ENCODE measurements at regions of chr6 and their contacts with region 1.

Region 1: DNA sequence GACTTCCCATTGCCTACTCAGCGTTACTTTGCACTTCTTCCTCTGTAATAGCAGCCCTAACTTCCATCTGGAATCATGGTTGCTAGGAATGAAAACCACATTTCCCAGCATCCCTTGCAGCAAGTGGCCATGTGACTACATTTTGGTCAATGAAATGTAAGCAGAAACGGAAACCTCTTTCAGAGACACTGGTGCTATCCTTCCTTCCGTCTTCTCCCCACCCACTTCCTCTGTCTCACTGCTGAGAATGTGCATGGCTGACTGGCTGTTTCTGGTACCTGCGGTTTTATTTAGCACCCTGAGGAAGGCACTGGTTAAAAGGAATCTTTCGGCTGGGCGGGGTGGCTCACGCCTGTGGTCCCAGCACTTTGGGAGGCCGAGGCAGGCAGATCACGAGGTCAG is 107.4 kb downstream of the SCML4 start:
- DNase-seq: no peak
- ATAC-seq: peak; percentile 44; the same call in 1 of the 2 replicates
- H3K4me3 ChIP-seq: peak overlapping the region in 1 of 2 experiments; percentile 36; a peak in 1 of 4 replicates
- H3K27ac ChIP-seq: no peak overlapping the region
- H3K4me1 ChIP-seq: no peaks in the 10 kb centered on the region; the same call in 1 of the 2 replicates
- H3K27me3 ChIP-seq: peaks cover 8% of the 10 kb centered on the region; the same call in 1 of the 2 replicates
- CTCF ChIP-seq: no peak

Region 2: DNA sequence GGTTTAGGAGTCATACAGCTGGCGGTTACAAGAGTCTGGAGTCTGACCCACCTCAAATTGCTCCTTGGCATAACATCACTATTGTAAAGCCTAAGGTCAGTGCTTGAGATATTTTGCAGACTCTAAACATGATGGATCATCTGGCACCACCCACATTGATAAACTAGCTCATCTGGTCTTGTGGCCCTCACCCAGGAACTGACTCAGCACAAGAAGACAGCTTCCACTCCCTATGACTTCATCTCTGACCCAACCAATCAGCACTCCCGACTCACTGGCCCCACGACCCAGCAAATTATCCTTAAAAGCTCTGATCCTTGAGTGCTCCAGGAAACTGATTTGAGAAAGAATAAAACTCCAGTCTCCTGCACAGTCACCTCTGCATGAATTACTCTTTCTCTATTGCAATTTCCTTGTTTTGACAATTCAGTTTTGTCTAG is 858.0 kb before region 1 on chr6:
- CTCF ChIA-PET with region 1: no interaction called
- POLR2A ChIA-PET with region 1: no interaction called
- in situ Hi-C with region 1: no loop called
- intact Hi-C with region 1: no loop called
- DNase-seq: no peak
- ATAC-seq: no peak
- H3K4me3 ChIP-seq: no peak overlapping the region
- H3K27ac ChIP-seq: no peak overlapping the region
- H3K4me1 ChIP-seq: no peaks in the 10 kb centered on the region
- H3K27me3 ChIP-seq: no peaks in the 10 kb centered on the region
- CTCF ChIP-seq: no peak

Region 3: GRCh38 chr6:107185391-107185970 is 531.2 kb before region 1 on chr6:
- CTCF ChIA-PET with region 1: no interaction called
- POLR2A ChIA-PET with region 1: interaction called, 12 read pairs
- in situ Hi-C with region 1: no loop called
- intact Hi-C with region 1: no loop called
- DNase-seq: no peak
- ATAC-seq: peak; percentile 82
- H3K4me3 ChIP-seq: no peak overlapping the region
- H3K27ac ChIP-seq: no peak overlapping the region
- H3K4me1 ChIP-seq: no peaks in the 10 kb centered on the region
- H3K27me3 ChIP-seq: no peaks in the 10 kb centered on the region
- CTCF ChIP-seq: peak; percentile 71

Region 4: DNA sequence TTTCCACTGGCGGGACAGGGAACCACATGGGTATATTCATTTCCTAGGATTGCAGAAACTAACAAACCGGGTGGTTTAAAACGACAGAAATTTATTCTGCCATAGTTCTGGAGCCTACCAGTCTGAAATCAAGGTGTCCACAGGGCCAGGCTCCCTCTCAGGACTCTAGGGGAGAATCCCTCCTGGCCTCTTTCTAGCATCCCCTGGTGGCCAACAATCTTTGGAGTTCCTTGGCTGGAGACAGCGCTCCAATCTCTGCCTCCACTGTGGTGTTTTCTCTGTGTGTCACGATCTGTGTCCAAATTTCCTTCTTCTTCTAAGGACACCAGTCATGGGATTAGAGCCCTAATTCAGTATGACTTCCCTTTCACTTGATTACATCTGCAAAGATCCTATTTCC is 12.4 kb after region 1 on chr6:
- CTCF ChIA-PET with region 1: interaction called, 10 read pairs
- POLR2A ChIA-PET with region 1: no interaction called
- in situ Hi-C with region 1: no loop called
- intact Hi-C with region 1: no loop called
- DNase-seq: no peak
- ATAC-seq: peak; percentile 43; the same call in 1 of the 2 replicates
- H3K4me3 ChIP-seq: no peak overlapping the region
- H3K27ac ChIP-seq: no peak overlapping the region
- H3K4me1 ChIP-seq: 0 out of 2 replicates have a peak, but pooled peaks cover 3% of the 10 kb centered on the region
- H3K27me3 ChIP-seq: peaks cover 51% of the 10 kb centered on the region
- CTCF ChIP-seq: peak; percentile 68

Region 5: GRCh38 chr6:107847844-107848802 is 131.4 kb after region 1 on chr6:
- CTCF ChIA-PET with region 1: no interaction called
- POLR2A ChIA-PET with region 1: no interaction called
- in situ Hi-C with region 1: no loop called
- intact Hi-C with region 1: no loop called
- DNase-seq: peak; percentile 18
- ATAC-seq: peak; percentile 96
- H3K4me3 ChIP-seq: peak overlapping the region; percentile 45 to 71
- H3K27ac ChIP-seq: peak overlapping the region; percentile 30; the same call in 1 of the 2 replicates
- H3K4me1 ChIP-seq: no peaks in the 10 kb centered on the region
- H3K27me3 ChIP-seq: no peaks in the 10 kb centered on the region
- CTCF ChIP-seq: peak; percentile 99